Motor neuron (in vitro differentiated cells): ENCODE measurements at regions of chr10 and their contacts with region 1.

Region 1: GRCh38 chr10:93376372-93377293 is 105.5 kb downstream of the MYOF start:
- ATAC-seq: peak; percentile 80 to 95 (median 88)
- H3K4me3 ChIP-seq: no peak overlapping the region
- H3K27ac ChIP-seq: no peak overlapping the region
- H3K4me1 ChIP-seq: peaks cover 5 to 7% of the 10 kb centered on the region in 2 donors

Region 2: DNA sequence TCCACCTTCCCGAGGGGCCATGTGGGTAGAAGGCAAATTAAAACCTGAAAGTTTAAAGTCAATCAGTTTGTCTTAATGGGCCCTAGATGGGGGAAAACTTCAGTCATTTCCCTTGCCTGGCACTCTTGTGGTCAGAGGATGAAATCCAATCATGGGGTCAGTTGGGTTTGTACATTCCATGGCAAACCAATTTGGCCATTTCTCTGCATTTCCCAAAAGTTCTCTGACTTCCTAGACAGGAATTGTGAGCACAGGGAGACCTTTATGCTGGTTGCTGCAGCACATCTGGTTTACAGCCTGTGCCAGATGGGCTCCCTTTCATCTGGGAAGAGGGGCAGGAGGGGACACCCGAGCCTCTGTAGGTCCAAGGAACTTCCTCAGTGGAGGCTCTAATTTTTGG is 190.0 kb before region 1 on chr10:
- in situ Hi-C with region 1: no loop called
- ATAC-seq: no peak
- H3K4me3 ChIP-seq: no peak overlapping the region
- H3K27ac ChIP-seq: no peak overlapping the region
- H3K4me1 ChIP-seq: no peaks in the 10 kb centered on the region

Region 3: GRCh38 chr10:93199191-93199751 is 177.4 kb before region 1 on chr10:
- in situ Hi-C with region 1: no loop called
- ATAC-seq: peak; percentile 89 to 96 (median 94)
- H3K4me3 ChIP-seq: peak overlapping the region in 4 of 5 donors; percentile 5 to 13 (median 10)
- H3K27ac ChIP-seq: peak overlapping the region; percentile 1 to 24
- H3K4me1 ChIP-seq: peaks cover 7 to 8% of the 10 kb centered on the region in 2 donors

Region 4: GRCh38 chr10:93482145-93482834 is 105.7 kb after region 1 on chr10 and contains the start of gene MYOF:
- in situ Hi-C with region 1: loop called in 8 of 9 experiments (anchors 10 to 25 kb)
- ATAC-seq: peak; percentile 65 to 89 (median 79)
- H3K4me3 ChIP-seq: peak within 1 kb of the TSS; percentile 17 to 38 (median 33)
- H3K27ac ChIP-seq: no peak within 1 kb of the TSS
- H3K4me1 ChIP-seq: peaks cover 0 to 6% of the 10 kb centered on the region in 2 donors
- total RNA-seq, gene MYOF: 0.29 to 258 (median 13.7) TPM

Region 5: DNA sequence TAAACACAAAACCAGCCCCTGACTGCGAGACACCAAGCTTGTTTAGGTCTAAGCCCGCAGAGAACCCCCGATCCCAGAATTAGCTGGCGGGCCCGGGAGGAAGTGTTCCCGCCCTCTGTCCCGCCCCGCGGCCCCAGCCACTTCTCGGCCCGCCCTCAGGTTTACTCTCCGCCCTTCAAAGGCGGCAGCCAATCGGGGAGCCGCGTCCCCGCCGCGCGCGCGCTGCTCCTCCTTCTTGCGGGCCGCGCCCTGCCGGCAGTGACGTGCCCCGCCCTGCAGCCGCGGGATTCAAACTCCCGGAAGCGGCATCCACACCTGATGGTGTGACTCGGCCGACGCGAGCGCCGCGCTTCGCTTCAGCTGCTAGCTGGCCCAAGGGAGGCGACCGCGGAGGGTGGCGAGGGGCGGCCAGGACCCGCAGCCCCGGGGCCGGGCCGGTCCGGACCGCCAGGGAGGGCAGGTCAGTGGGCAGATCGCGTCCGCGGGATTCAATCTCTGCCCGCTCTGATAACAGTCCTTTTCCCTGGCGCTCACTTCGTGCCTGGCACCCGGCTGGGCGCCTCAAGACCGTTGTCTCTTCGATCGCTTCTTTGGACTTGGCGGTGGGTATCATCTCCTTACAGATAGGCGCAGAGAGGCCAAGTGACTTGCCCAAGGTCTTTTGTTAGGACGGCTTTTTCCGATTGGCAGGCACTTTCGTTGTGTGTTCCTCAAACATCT is 119.8 kb after region 1 on chr10 and contains the start of gene CEP55:
- in situ Hi-C with region 1: loop called in 2 of 9 experiments (anchors 25 kb)
- ATAC-seq: peak; percentile 98 to 100 (median 99)
- H3K4me3 ChIP-seq: peak within 1 kb of the TSS; percentile 43 to 72 (median 62)
- H3K27ac ChIP-seq: no peak within 1 kb of the TSS
- H3K4me1 ChIP-seq: peaks cover 0 to 2% of the 10 kb centered on the region in 2 donors
- total RNA-seq, gene CEP55: 0.36 to 21.1 (median 1.4) TPM

Region 6: DNA sequence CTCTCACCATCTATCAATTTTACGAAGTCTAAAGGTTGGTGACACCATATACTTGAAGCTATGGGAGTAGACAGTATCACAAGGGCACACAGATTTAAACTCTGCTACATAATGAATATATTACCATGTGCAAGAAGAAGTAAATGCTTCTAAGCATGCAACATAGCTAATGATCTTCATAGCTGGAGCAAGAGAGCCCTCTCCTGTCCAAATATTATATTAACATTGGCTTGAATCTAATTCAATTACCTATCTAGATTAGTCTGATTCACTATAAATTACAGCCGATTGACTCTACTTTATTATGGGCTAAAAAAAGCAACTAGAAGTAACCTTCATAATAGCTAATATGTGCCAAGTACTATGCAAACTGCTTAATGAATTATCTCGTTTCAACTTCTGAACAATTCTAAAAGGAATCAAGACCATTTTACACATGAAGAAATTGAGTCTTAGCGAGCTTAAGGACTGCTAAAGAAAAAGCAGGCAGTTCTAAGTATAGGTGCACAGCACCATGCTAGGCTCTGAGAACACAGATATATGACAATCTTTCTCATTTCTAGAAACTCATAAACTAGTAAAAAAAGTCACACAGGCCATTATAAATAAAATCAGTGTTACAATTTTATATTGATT is 303.9 kb after region 1 on chr10:
- in situ Hi-C with region 1: loop called in 2 of 9 experiments (anchors 25 kb)
- ATAC-seq: peak in 6 of 8 experiments; percentile 30 to 95 (median 74)
- H3K4me3 ChIP-seq: no peak overlapping the region
- H3K27ac ChIP-seq: no peak overlapping the region
- H3K4me1 ChIP-seq: no peaks in the 10 kb centered on the region